Activated CD4-positive, alpha-beta T cell treated with anti-CD3 and anti-CD28 coated beads, Interleukin-2, amount 10 ng/mL, durations not matched to agents 24 days and 14 days (primary cell): ENCODE measurements at regions of chr14 and their contacts with region 1.

Region 1: DNA sequence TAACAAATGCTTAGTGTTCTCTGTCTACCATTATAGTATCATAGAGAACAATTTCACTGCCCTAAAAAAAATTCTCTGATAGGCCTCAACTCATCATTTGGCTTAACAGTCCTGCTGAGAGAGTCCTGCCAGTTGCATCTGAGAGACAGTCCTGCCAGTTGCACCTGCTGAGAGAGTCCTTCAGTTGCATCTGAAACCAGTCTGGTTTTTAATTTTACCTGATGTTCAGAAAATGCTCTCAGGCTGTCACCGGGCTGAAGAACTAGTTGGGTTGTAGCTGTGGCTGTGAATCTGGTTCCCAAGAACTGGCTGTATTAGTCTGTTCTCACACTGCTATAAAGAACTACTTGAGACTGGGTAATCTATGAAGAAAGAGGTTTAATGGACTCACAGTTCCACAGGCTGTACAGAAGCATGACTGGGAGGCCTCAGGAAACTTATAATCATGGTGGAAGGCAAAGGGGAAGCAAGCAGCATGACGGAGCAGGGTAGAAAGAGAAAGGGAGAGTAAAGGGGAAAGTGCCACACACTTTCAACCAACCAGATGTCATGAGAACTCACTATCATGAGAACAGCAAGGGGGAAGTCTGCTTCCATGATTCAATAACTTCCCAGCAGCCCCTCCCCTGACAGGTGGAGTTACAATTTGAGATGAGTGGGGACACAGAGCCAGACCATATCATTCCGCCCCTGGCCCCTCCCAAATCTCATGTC is 51.6 kb downstream of the PRKCH start:
- DNase-seq: no peak
- H3K4me3 Mint-ChIP-seq: no peak overlapping the region
- H3K27ac Mint-ChIP-seq: peak overlapping the region; percentile 76
- H3K4me1 Mint-ChIP-seq: peaks cover 61% of the 10 kb centered on the region
- H3K27me3 Mint-ChIP-seq: no peaks in the 10 kb centered on the region

Region 2: GRCh38 chr14:61347826-61348443 is 25.1 kb before region 1 on chr14:
- intact Hi-C with region 1: loop called (anchors 1 kb)
- DNase-seq: peak; percentile 73
- H3K4me3 Mint-ChIP-seq: peak overlapping the region; percentile 83
- H3K27ac Mint-ChIP-seq: peak overlapping the region; percentile 93
- H3K4me1 Mint-ChIP-seq: peaks cover 86% of the 10 kb centered on the region
- H3K27me3 Mint-ChIP-seq: no peaks in the 10 kb centered on the region

Region 3: GRCh38 chr14:61355892-61356325 is 17.1 kb before region 1 on chr14:
- intact Hi-C with region 1: loop called (anchors 2 kb)
- DNase-seq: peak; percentile 78
- H3K4me3 Mint-ChIP-seq: peak overlapping the region; percentile 77
- H3K27ac Mint-ChIP-seq: peak overlapping the region; percentile 75
- H3K4me1 Mint-ChIP-seq: peaks cover 80% of the 10 kb centered on the region
- H3K27me3 Mint-ChIP-seq: no peaks in the 10 kb centered on the region

Region 4: DNA sequence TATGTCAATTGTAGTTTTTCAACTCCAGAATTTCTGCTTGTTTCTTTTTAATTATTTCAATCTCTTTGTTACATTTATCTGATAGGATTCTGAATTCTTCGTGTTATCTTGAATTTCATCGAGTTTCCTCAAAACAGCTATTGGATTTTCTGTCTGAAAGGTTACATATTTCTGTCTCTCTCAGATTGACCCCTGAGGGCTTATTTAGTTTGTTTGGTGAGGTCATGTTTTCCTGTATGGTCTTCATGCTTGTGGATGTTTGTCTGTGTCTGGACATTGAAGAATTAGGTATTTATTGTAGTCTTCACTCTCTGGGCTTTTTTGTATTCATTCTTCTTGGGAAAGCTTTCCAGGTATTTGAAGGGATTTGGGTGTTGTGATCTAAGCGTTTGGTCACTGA is 474.9 kb after region 1 on chr14:
- intact Hi-C with region 1: no loop called
- DNase-seq: no peak
- H3K4me3 Mint-ChIP-seq: no peak overlapping the region
- H3K27ac Mint-ChIP-seq: no peak overlapping the region
- H3K4me1 Mint-ChIP-seq: no peaks in the 10 kb centered on the region
- H3K27me3 Mint-ChIP-seq: peaks cover 29% of the 10 kb centered on the region